ENCODE measurements at regions of chr11 and their contacts with region 1.

Region 1: DNA sequence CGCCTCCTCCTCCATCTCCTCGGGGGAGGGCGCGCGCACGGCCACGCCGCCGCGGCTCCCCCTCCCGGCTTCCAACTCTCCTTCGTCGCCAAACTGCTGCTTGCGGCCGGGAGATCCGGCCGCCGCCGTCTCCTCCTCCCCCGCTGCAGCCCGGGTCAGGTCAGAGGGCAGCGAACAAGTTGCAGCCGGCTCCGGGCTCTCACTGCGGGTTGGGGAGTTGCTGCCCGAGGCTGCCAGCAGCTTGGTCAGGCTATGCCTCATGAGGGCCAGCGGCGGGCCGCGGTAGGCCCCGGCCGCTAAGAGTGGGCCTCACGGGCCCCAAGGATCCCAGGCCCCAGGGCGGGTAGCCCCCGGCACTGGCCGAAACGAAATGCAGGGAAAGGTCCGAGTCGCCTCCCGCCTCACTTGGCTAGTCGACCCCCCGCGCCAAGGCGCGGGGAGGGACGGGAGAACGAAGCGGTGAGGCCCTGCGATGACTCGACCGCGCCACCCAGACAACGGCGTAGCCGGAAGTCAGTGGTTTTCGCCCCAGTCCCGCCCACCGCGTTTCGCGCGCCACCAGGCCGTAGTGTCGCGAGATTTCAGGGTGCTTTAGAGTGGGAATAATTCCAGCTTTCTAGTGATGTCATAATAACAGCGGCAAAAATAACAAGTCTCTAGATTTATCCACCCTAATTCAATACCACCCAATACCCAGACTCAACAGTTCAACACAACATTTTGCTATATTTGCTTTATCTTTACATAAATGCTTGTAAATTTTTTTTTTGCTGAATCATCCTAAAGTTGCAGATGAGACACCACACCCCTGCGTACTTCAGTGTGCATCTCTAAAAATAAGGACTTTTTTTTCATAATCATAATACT is at the start of gene CREBZF:
- DNase-seq: peak; percentile 96
- ATAC-seq: peak; percentile 98
- total RNA-seq, gene CREBZF: 12.5 TPM

Region 2: GRCh38 chr11:85595285-85595884 is 69.5 kb before region 1 on chr11:
- intact Hi-C with region 1: loop called (anchors 2 kb)
- DNase-seq: no peak
- ATAC-seq: peak; percentile 54

Region 3: GRCh38 chr11:85627998-85628770 is 36.7 kb before region 1 on chr11 and contains the start of gene TMEM126B:
- intact Hi-C with region 1: loop called (anchors 1 kb)
- DNase-seq: peak; percentile 99
- ATAC-seq: peak; percentile 100
- total RNA-seq, gene TMEM126B: 64.3 TPM

Region 4: DNA sequence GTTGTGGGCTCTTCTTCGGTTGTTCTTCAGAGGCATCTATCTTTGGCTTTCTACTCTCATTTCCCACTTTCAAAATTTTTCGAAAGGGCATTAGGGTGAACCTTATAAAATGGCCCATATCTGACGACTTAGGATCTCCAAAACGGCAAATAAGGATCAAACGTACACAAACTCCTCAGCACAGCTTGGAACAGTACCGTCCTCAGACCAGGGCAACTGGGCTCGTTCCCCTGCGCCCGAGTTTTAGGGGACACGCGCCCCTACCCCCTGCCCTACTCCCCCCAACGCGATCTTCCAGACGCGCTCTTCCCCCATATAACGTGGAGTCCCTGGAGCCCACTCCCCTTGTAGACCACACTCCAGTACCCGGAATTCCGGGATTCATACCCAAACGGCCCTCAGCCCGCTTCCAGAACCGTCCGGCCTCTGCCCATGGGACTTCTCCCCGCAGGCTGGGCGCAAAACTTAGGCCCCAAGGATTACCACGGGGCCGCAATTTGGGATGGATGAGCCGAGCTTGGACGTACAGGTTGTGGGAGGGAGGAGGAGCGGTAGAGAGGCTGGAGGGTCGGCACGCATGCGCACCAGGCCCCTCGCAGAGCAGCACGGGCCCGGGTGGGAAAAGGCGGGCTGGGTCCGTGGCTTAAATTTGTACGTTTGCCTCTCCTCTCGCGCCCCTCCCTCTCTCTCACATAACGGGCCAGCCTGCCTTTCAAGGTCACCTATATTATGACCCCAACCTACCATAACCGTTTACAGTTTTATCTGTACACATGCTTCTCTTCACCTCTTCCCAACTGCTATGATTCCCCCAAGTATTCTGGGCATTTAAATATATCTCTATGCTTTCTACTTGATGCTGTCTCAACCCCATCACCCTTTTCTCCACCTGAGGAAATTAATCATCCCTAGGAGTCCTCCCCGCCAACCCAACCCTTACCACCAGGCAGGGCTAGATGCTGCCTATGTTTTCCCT is 17.8 kb after region 1 on chr11:
- intact Hi-C with region 1: loop called (anchors 2 kb)
- DNase-seq: peak; percentile 83
- ATAC-seq: peak; percentile 64

Region 5: DNA sequence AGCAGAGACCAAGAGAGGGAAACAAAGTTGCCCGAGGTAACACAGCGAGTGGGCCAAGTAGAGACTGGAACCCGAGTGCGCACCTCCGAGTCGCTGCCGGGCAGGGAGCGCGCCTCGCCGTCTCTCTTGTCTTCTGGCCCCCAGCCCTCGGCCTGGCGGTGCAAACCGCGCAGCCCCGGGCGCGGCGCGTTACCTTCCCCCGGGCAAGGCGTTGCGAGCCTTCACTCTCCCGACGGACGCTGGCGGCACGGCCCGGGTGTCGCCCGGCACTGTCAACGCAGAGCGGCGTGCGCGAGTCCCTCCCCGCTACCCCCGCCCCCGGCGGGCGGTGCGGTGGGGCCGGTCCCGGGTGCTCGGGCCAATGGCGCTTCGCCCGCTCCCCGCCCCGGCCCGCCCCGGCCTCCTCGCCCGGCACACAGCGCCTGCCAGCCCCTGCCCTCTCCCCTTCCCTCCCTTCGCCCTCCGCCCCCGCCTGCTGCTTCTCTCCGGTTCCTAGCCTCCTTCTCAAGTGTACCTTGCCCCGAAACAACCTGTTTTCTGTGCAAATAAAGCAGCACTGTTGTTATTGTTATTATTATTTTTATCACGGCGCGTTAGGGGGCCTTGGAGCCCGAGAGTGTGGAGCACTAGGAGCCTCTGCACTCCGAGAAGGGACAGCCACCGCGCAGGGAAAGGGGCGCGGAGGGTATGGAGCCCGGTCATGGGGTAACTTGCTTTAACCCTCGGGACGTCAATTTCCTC is 146.2 kb after region 1 on chr11 and contains the start of gene SYTL2:
- intact Hi-C with region 1: loop called (anchors 1 kb)
- DNase-seq: peak; percentile 86
- ATAC-seq: peak; percentile 99
- total RNA-seq, gene SYTL2: 2.4 TPM

Region 6: GRCh38 chr11:85835729-85836128 is 170.9 kb after region 1 on chr11:
- intact Hi-C with region 1: no loop called
- DNase-seq: no peak
- ATAC-seq: no peak

Measured in Right ventricle myocardium inferior (tissue), 1 donor.